Esophagus muscularis mucosa (tissue), 4 donors: ENCODE measurements at regions of chr4 and their contacts with region 1.

Region 1: DNA sequence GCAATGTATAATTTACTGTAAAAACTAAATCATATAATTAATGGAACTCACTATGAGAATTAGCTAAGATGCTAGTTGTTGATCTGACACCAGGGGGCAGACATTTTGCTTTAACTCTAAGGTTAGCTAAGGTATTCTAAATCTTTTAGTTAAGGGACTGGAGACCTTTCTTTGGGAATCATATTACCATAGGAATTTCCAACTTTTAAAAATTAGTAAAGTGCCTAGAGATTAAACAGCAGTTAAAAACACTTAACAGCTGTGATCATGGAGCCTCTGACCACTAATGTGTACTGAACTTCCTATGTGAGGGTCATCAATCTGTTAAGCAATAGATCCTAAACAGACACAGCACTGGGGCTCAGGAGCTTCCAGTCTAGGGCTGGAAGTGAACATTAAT is 226.6 kb downstream of the NSUN7 start:
- DNase-seq: no peak
- H3K4me3 ChIP-seq: no peak overlapping the region
- H3K27ac ChIP-seq: no peak overlapping the region
- H3K4me1 ChIP-seq: peaks cover 0 to 9% (median 6%) of the 10 kb centered on the region in 4 donors
- H3K27me3 ChIP-seq: no peaks in the 10 kb centered on the region
- CTCF ChIP-seq: peak; percentile 73 to 80 (median 74)
- EP300 ChIP-seq: no peak
- POLR2A ChIP-seq: no peak

Region 2: GRCh38 chr4:40933272-40934053 is 42.9 kb before region 1 on chr4:
- intact Hi-C with region 1: loop called (anchors 5 kb)
- DNase-seq: no peak
- H3K4me3 ChIP-seq: no peak overlapping the region
- H3K27ac ChIP-seq: no peak overlapping the region
- H3K4me1 ChIP-seq: peaks cover 0 to 26% (median 21%) of the 10 kb centered on the region in 4 donors
- H3K27me3 ChIP-seq: no peaks in the 10 kb centered on the region
- CTCF ChIP-seq: no peak
- EP300 ChIP-seq: no peak
- POLR2A ChIP-seq: no peak